PC-9 (cell line): ENCODE measurements at regions of chr10 and their contacts with region 1.

Region 1: DNA sequence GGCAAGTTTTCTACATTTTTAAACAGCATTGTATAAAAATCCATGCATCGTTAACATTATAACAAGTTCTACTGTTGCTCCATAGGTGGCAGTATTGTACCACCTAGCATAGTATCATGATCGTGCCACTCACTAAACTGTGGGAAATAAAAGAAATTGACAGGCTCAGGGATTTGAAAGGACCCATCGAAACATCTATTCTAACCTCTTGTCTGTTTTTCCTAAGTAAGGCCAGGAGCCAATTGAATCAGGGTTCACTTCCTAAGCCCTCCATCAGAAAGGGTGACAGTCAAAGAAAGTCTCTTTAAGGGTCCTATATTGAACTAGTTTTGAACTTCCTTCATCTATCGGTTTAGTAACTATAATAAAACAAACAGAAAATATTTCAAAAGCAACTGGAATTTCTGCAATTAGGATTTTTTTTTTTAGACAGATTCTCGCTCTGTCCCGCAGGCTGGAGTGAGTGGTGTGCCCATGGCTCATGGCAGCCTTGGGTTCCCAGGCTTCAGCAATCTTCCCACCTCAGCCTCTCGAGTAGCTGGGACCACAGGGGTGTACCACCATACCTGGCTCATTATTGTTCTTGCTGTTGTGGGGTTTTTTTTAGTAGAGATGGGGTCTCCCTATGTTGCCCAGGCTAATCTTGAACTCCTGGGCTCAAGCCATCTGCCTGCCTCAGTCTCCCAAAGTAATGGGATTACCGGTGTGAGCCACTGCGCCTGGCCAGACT is 9.4 kb downstream of the HACD1 start:
- DNase-seq: peak in 1 of 2 experiments; percentile 43
- H3K4me3 ChIP-seq: no peak overlapping the region
- H3K27ac ChIP-seq: no peak overlapping the region
- H3K4me1 ChIP-seq: no peaks in the 10 kb centered on the region
- H3K27me3 ChIP-seq: no peaks in the 10 kb centered on the region
- CTCF ChIP-seq: peak; percentile 85

Region 2: DNA sequence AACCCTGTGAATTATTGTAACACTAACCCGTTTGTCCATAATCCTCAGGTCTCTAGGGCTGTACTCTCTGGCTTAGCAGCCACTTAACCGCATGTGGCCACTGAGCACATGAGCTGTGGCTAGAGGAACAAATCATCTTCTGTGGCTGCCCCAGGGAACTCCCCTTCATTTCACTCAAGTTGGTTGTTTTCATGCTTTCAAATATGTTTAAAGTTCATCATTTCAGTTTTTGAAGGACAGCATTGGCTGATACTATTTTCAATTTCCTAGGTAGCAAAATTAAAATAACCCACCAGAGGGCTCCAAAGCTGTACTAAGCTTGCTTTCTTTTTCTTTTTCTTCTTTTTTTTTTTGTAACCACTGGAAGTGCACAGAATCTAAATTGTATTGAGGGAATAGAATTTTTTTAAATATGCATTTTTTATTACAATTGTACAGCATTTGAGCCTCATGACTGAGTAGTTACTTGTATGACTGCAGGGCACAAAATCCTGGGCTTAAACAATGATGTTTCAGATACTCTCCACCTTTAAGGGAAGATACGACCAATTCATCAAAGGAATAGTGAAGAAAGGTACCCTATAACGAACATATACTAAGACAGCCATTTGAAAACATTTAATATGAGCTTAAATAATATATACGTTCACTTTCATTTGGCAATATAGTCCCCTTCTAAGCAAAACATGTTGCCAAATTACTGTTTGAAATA is 240.0 kb after region 1 on chr10:
- CTCF ChIA-PET with region 1: no interaction called
- POLR2A ChIA-PET with region 1: no interaction called
- intact Hi-C with region 1: loop called (anchors 5 kb)
- DNase-seq: no peak
- H3K4me3 ChIP-seq: no peak overlapping the region
- H3K27ac ChIP-seq: no peak overlapping the region
- H3K4me1 ChIP-seq: no peaks in the 10 kb centered on the region
- H3K27me3 ChIP-seq: no peaks in the 10 kb centered on the region
- CTCF ChIP-seq: peak; percentile 61

Region 3: GRCh38 chr10:17872191-17873091 is 264.7 kb after region 1 on chr10:
- CTCF ChIA-PET with region 1: no interaction called
- POLR2A ChIA-PET with region 1: no interaction called
- intact Hi-C with region 1: loop called (anchors 1 kb)
- DNase-seq: peak in 1 of 2 experiments; percentile 5
- H3K4me3 ChIP-seq: no peak overlapping the region
- H3K27ac ChIP-seq: no peak overlapping the region
- H3K4me1 ChIP-seq: no peaks in the 10 kb centered on the region
- H3K27me3 ChIP-seq: no peaks in the 10 kb centered on the region
- CTCF ChIP-seq: no peak

Region 4: GRCh38 chr10:17923728-17924127 is 316.0 kb after region 1 on chr10:
- CTCF ChIA-PET with region 1: interaction called, 3 read pairs
- POLR2A ChIA-PET with region 1: no interaction called
- intact Hi-C with region 1: loop called (anchors 5 kb)
- DNase-seq: peak; percentile 86 to 87
- H3K4me3 ChIP-seq: no peak overlapping the region; the same call in 1 of the 2 replicates
- H3K27ac ChIP-seq: peak overlapping the region; percentile 86
- H3K4me1 ChIP-seq: peaks cover 20% of the 10 kb centered on the region
- H3K27me3 ChIP-seq: no peaks in the 10 kb centered on the region
- CTCF ChIP-seq: no peak

Region 5: DNA sequence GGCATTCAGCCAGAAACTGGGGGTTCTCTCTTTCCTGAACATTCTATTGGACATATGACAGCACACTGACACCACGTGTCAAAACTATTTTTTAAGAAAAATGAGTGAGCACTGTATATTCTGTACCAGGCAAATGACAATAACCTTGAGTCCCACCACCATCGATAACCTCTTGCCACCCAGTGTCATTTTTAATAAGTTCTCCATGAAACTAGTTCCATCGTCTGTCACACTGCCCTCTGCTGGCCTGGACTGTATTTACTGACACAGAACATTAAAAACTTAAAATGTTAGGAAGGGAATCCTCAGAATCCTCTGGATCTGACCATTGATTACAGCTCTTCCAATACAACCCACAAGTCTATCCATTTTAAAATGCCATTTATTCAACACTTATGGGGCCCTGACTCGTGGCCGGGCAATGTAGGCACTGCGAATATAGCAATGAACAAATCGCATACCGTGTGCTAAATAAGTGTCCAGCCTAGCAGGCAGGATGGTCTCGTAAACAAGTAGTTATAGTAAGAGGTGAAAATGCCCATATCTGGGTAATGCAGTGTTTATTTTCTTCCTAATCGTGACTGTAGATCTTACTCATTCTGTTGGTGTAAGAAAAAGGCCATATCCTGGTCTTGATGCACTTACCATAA is 496.6 kb after region 1 on chr10:
- CTCF ChIA-PET with region 1: no interaction called
- POLR2A ChIA-PET with region 1: no interaction called
- intact Hi-C with region 1: loop called (anchors 5 kb)
- DNase-seq: peak; percentile 28 to 33
- H3K4me3 ChIP-seq: no peak overlapping the region
- H3K27ac ChIP-seq: no peak overlapping the region
- H3K4me1 ChIP-seq: no peaks in the 10 kb centered on the region
- H3K27me3 ChIP-seq: no peaks in the 10 kb centered on the region
- CTCF ChIP-seq: peak; percentile 71

Region 6: DNA sequence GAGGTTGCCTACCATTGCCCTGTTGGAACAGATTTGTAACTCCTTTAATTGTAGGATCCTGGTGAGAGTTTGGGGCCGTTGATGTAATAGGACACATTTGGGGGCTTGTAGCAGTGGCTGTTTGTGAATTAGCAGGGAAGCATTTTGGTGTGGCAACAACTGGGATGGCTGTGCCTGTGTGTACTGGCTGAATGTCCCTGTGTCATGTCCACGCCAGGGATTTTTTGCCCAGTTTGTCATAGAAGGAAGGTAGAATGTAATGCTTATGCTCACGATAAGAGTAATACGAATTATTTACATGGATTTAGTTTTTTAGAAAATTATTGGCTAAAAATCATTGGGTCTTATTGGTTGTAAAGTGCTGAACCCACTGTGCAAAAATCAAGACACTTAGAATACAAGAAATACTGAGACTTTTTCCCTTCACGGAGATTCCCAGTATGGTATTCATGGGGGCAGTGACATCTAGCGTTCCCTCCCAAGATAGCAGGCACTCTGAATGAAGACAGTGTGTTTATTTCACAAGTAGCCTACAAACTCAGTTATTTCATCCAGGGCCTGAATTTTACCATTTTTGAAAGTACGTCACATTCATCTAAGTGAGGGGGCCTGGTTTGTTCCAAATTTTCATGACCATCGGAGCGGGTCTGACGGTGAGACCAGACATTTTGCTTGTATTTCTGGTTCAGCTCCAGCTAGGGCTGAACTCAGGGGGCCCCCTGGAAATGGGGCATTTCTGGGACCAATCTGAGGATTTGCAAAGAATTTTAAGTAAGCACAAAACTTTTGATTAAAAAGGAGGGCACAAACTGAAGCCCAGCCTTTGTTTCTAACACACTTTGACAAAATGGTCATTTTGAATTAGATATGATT is 607.2 kb after region 1 on chr10:
- CTCF ChIA-PET with region 1: interaction called, 6 read pairs
- POLR2A ChIA-PET with region 1: no interaction called
- intact Hi-C with region 1: loop called (anchors 1 kb)
- DNase-seq: peak in 1 of 2 experiments; percentile 45
- H3K4me3 ChIP-seq: no peak overlapping the region
- H3K27ac ChIP-seq: no peak overlapping the region
- H3K4me1 ChIP-seq: no peaks in the 10 kb centered on the region
- H3K27me3 ChIP-seq: no peaks in the 10 kb centered on the region
- CTCF ChIP-seq: peak; percentile 72

Region 7: GRCh38 chr10:18238870-18239485 is 631.2 kb after region 1 on chr10:
- CTCF ChIA-PET with region 1: interaction called, 12 read pairs
- POLR2A ChIA-PET with region 1: no interaction called
- intact Hi-C with region 1: loop called (anchors 5 kb)
- DNase-seq: peak in 1 of 2 experiments; percentile 1
- H3K4me3 ChIP-seq: no peak overlapping the region
- H3K27ac ChIP-seq: no peak overlapping the region
- H3K4me1 ChIP-seq: no peaks in the 10 kb centered on the region
- H3K27me3 ChIP-seq: no peaks in the 10 kb centered on the region
- CTCF ChIP-seq: peak; percentile 55; the same call in 1 of the 2 replicates